ENCODE measurements at regions of chrX and their contacts with region 1.

Region 1: GRCh38 chrX:12946838-12947544 is 27.9 kb upstream of the TMSB4X start:
- DNase-seq: peak; percentile 64 to 94
- H3K4me3 ChIP-seq: no peak overlapping the region
- CTCF ChIP-seq: peak in 1 of 3 donors; percentile 52
- POLR2A ChIP-seq: no peak

Region 2: GRCh38 chrX:13487731-13488523 is 540.9 kb after region 1 on chrX:
- intact Hi-C with region 1: loop called (anchors 10 kb)
- DNase-seq: peak in 1 of 2 donors; percentile 47
- H3K4me3 ChIP-seq: no peak overlapping the region
- CTCF ChIP-seq: peak in 1 of 3 donors; percentile 55
- POLR2A ChIP-seq: no peak

Measured in lower leg skin (tissue), 4 donors.